ENCODE measurements at regions of chr6 and their contacts with region 1.

Region 1: GRCh38 chr6:143575440-143575839 is 63.9 kb upstream of the FUCA2 start:
- DNase-seq: peak; percentile 69
- H3K4me3 ChIP-seq: no peak overlapping the region
- H3K27ac ChIP-seq: no peak overlapping the region
- H3K4me1 ChIP-seq: no peaks in the 10 kb centered on the region
- CTCF ChIP-seq: peak; percentile 93

Region 2: DNA sequence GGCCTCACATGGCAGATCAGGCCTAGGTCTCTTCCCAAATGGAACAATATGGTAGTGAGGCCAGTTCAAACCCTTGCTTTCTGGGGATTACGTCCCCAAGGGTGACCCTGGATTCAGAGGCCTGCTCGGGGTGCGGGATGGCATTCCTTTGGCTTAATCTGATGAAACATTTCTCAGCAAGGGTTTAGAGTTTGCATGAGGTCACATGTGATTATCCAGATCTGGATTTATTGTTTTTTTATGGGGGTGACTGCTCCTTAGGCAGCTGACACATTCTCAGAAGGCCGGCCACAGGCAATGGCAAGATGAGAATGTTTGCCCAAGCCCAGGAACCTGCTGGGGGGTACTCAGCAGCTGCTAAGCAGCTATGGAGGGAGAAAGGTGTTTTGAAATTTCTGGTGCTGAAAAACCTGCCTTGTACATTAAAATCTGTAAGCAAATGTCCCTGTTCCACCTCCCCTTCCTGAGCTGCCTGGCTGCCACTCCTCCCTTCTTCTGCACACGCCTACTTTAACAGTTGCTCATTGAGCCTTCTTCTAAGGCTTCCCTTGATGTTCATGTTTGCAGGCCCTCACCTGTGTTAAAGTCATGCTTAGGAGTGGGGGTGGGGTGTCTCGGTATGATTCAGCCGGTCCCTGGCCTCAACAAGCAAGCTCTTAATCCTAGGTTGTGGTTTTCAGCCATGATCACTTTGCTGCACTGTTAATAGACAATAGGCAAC is 26.1 kb before region 1 on chr6:
- CTCF ChIA-PET with region 1: no interaction called
- POLR2A ChIA-PET with region 1: no interaction called
- intact Hi-C with region 1: no loop called
- DNase-seq: no peak
- H3K4me3 ChIP-seq: no peak overlapping the region
- H3K27ac ChIP-seq: no peak overlapping the region
- H3K4me1 ChIP-seq: no peaks in the 10 kb centered on the region
- CTCF ChIP-seq: no peak

Region 3: DNA sequence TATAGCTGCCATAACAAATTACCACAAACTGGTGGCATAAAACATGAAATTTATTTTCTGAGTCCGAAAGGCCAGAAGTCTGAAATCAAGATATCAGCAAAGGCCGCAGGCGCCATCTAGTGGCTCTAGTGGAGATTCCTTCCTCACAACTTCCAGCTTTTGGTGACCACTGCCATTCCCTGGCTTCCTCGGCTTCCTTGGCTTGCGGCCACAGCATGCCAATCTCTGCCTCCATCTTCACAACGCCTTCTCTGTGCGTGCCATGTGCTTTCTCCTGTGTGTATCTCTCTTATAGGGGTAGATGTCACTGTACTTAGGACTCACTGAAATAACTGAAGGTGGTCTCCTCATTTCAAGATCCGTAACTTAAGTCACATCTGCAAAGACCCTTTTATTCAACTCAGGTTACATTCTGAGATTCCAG is 438.1 kb after region 1 on chr6:
- CTCF ChIA-PET with region 1: no interaction called
- POLR2A ChIA-PET with region 1: no interaction called
- intact Hi-C with region 1: loop called (anchors 1 kb)
- DNase-seq: peak; percentile 61
- H3K4me3 ChIP-seq: no peak overlapping the region
- H3K27ac ChIP-seq: no peak overlapping the region
- H3K4me1 ChIP-seq: no peaks in the 10 kb centered on the region
- CTCF ChIP-seq: peak; percentile 95

Measured in OCI-LY7 (cell line).